IMR-90 (cell line): ENCODE measurements at regions of chr4 and their contacts with region 1.

Region 1: DNA sequence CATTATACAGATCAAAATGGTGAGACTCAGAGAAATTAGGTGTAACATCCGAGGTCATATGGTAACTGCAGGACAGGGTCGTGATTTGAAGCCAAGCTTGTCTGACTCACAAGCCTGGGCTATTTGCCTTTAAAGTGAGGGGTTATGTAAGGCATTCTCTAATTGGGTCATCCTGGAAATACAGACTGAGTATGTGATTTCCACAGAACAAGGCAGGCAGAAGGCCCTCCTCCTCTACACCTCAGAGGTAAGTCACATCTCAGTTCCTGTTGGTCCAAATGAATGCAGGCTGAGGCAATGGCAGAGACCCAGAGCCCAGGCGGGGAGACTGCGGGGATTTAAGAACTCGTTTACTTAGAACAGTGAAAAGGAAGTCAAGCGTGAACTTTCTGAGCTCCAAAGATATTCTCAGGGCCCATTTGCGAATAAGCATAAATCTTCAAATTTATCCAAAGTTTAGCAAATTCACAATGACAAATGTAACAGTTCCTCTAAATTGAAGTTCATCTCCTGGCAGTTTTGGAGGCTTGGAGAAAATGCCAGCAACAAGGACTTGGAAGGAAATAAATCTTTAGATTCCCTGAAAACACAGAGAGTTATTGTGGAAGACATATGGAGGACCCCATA is 153.3 kb downstream of the LDB2 start:
- DNase-seq: peak; percentile 89
- ATAC-seq: peak; percentile 79
- H3K4me3 ChIP-seq: no peak overlapping the region
- H3K27ac ChIP-seq: no peak overlapping the region
- H3K4me1 ChIP-seq: peaks cover 2% of the 10 kb centered on the region
- H3K27me3 ChIP-seq: no peaks in the 10 kb centered on the region
- CTCF ChIP-seq: no peak
- POLR2A ChIP-seq: no peak
- RAD21 ChIP-seq: no peak

Region 2: DNA sequence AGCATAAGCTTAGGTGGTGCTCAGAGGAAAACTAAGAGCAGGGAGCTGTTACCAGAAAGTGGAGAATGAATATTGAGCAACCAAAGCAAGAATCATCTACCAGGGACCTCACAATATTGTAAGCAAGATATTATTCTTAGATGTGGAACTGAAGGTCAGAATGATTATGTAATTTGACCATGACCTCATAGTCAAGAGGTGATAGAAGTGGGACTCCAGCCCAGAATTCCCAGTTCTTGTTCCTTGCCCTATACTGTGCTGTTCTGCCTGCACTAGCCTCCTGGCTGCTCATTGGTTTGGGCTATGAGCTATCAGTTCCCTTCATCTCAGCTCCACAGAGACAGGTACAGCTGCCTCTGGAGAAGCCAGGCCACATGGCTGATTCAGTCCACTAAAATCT is 76.1 kb before region 1 on chr4:
- CTCF ChIA-PET with region 1: interaction called, 7 read pairs
- POLR2A ChIA-PET with region 1: interaction called, 13 read pairs
- dilution Hi-C with region 1: no loop called
- in situ Hi-C with region 1: no loop called
- intact Hi-C with region 1: no loop called
- DNase-seq: peak; percentile 45
- ATAC-seq: peak; percentile 46
- H3K4me3 ChIP-seq: no peak overlapping the region
- H3K27ac ChIP-seq: no peak overlapping the region
- H3K4me1 ChIP-seq: peaks cover 20% of the 10 kb centered on the region
- H3K27me3 ChIP-seq: no peaks in the 10 kb centered on the region
- CTCF ChIP-seq: no peak
- POLR2A ChIP-seq: no peak
- RAD21 ChIP-seq: no peak

Region 3: DNA sequence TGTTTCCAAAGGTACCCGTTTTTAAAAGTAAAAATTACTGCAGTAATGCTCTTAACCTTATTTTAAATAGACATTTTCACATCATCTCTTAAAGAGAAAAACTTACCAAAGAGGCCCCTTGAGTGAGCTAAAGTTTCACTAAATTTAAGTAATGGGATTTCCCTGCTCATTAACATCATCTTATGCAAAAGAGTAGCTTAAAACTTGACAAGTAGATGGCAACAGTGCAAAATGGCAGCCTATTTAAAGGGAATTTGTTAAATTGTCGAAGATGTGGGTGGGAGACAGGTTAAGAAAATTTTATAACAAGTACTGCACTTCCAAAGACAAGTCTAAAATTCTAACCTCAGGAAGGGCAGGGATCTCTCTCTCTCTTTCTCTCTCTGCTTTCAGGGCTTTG is 425.0 kb after region 1 on chr4:
- CTCF ChIA-PET with region 1: interaction called, 11 read pairs
- POLR2A ChIA-PET with region 1: no interaction called
- dilution Hi-C with region 1: no loop called
- in situ Hi-C with region 1: no loop called
- intact Hi-C with region 1: no loop called
- DNase-seq: no peak
- ATAC-seq: no peak
- H3K4me3 ChIP-seq: no peak overlapping the region
- H3K27ac ChIP-seq: no peak overlapping the region
- H3K4me1 ChIP-seq: peaks cover 8% of the 10 kb centered on the region
- H3K27me3 ChIP-seq: no peaks in the 10 kb centered on the region
- CTCF ChIP-seq: no peak
- POLR2A ChIP-seq: no peak
- RAD21 ChIP-seq: no peak